Activated T-helper 1 cell treated with anti-CD3 and anti-CD28 coated beads, Interleukin-12 subunit alpha, Interleukin-12 subunit beta, Interleukin-2, Interleukin-4 antibody, amounts not matched to agents 30 ng/mL and 10 ng/mL and 1 ng/mL, durations not matched to agents 14 hours and 24 hours and 36 hours (primary cell): ENCODE measurements at regions of chr6 and their contacts with region 1.

Region 1: GRCh38 chr6:149316798-149317655 is 485 bp upstream of the TAB2 start:
- DNase-seq: peak; percentile 90
- H3K4me3 Mint-ChIP-seq: peak overlapping the region; percentile 85
- H3K27ac Mint-ChIP-seq: peak overlapping the region; percentile 85
- H3K4me1 Mint-ChIP-seq: peaks cover 39% of the 10 kb centered on the region
- H3K27me3 Mint-ChIP-seq: no peaks in the 10 kb centered on the region

Region 2: GRCh38 chr6:149140137-149140909 is 176.7 kb before region 1 on chr6:
- intact Hi-C with region 1: loop called (anchors 1 kb)
- DNase-seq: peak; percentile 62
- H3K4me3 Mint-ChIP-seq: peak overlapping the region; percentile 84
- H3K27ac Mint-ChIP-seq: peak overlapping the region; percentile 100
- H3K4me1 Mint-ChIP-seq: peaks cover 64% of the 10 kb centered on the region
- H3K27me3 Mint-ChIP-seq: no peaks in the 10 kb centered on the region

Region 3: DNA sequence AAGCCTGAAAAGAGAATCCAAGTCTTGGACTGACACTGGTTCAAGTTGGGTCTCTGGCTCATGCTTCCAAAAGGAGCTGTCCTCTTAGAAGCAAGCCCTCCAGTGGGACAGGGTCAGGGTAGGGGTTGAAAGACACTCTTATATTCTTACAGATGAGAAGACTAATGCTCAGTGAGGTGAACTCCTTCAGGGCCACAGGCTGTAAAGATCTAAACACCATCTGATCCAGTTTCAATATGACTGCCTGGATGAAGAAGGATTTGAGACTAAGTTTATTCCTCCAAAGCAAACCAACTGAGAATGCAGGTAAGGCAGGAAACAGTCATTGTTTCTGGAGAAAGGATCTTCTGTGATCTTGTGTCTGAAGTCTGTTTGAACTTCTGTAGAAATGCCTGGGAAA is 98.6 kb before region 1 on chr6:
- intact Hi-C with region 1: loop called (anchors 1 kb)
- DNase-seq: no peak
- H3K4me3 Mint-ChIP-seq: peak overlapping the region; percentile 45
- H3K27ac Mint-ChIP-seq: peak overlapping the region; percentile 77
- H3K4me1 Mint-ChIP-seq: peaks cover 56% of the 10 kb centered on the region
- H3K27me3 Mint-ChIP-seq: no peaks in the 10 kb centered on the region

Region 4: DNA sequence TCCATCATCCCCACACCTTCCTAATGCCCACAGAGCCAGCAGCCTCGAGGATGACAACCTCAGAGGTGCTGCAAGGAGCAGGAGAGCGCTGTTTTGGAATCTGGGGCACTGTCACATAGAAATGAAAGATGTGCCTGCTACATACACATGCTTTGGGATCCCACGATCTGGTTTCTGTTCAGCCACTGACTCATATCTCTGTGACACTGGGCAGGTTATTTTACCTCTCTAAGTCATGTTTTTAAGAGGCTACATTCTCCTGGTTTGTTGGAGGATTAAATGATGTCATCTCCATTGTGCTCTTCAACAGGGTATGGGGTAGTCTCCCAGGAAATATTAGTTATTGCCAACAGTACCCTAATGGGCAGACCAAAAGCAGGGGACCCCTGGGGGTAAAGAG is 32.1 kb before region 1 on chr6:
- intact Hi-C with region 1: loop called (anchors 2 kb)
- DNase-seq: no peak
- H3K4me3 Mint-ChIP-seq: peak overlapping the region; percentile 20
- H3K27ac Mint-ChIP-seq: peak overlapping the region; percentile 75
- H3K4me1 Mint-ChIP-seq: peaks cover 47% of the 10 kb centered on the region
- H3K27me3 Mint-ChIP-seq: no peaks in the 10 kb centered on the region

Region 5: DNA sequence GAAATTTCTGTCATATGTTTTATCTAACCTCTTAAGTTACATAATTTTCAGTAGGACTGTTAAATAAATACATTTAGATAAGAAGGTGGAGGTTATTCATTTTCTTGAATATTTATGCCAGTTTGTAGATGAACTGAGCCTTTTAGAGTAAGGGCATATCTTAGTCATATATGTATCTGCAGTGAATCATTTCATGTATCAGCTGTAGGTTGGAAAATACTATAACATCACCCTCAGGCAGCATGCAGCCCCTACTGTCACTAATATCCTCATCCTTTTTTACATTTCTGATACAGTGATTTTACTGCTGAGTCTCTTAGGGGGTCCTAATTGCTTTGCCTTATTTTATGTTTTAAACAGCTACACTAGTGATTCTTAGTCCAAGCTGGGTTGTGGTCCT is 63.5 kb after region 1 on chr6:
- intact Hi-C with region 1: loop called (anchors 2 kb)
- DNase-seq: no peak
- H3K4me3 Mint-ChIP-seq: no peak overlapping the region
- H3K27ac Mint-ChIP-seq: no peak overlapping the region
- H3K4me1 Mint-ChIP-seq: peaks cover 64% of the 10 kb centered on the region
- H3K27me3 Mint-ChIP-seq: no peaks in the 10 kb centered on the region

Region 6: DNA sequence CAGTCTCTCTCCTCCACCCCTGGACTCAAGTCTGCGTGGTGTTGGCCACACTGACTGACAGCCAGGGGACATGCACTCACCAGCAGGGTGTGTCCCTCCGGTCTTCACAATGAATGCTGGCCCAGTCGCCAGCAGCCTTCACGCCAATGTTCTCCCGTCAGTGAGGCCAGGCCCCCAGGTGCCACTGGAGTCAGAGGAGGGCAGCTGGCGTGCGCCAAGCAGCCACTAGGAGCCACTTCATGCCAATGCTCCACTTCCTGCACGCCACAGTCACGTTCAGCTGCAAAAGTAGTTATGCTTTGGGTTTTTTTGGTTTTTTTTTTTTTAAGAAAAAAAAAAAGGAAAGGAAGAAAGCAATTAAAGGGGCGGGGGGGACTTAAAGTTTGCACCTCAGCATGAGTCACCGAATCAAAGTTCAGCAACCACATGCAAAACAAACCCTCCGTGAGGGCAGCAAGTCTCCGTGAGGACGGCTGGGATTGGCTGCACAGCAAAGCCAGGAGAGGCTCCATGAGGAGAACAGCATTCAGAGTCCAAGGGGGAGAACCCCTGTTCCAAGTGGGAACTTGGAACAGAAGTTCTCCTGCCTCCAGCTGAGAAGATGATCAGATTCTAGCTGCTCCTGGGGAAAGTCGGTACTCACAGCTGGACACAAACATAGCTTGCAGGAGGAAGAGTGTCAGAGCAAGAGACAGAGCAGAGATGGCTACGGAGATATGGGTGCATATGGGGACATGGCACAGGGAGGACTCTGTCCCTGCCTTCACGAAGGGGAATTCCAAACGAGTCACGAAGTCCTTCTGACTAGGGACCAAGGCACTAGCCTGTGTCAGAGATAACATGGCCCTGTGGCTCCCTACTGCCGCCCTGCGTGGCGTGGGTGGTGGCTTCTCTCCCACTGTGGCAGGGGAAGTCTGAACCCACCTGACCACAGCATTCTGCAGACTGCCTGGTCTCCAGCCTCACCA is 168.0 kb after region 1 on chr6 and contains the start of gene ZC3H12D:
- intact Hi-C with region 1: loop called (anchors 2 kb)
- DNase-seq: peak; percentile 76
- H3K4me3 Mint-ChIP-seq: peak within 1 kb of the TSS; percentile 92
- H3K27ac Mint-ChIP-seq: peak within 1 kb of the TSS; percentile 99
- H3K4me1 Mint-ChIP-seq: peaks cover 74% of the 10 kb centered on the region
- H3K27me3 Mint-ChIP-seq: no peaks in the 10 kb centered on the region
- total RNA-seq, gene ZC3H12D: 94.7 and 96.7 TPM in 2 replicates